A549 (cell line): ENCODE measurements at regions of chr6 and their contacts with region 1.

Region 1: GRCh38 chr6:32118782-32119628 is 9.0 kb downstream of the ATF6B start:
- DNase-seq: peak; percentile 69 to 83
- ATAC-seq: peak; percentile 89 to 95
- H3K4me3 ChIP-seq: no peak overlapping the region
- H3K27ac ChIP-seq: no peak overlapping the region
- H3K4me1 ChIP-seq: peaks cover 14% of the 10 kb centered on the region; the same call in 1 of the 3 replicates
- CTCF ChIP-seq: peak; percentile 73
- EP300 ChIP-seq: no peak
- POLR2A ChIP-seq: no peak
- RAD21 ChIP-seq: peak; percentile 76 to 78

Region 2: GRCh38 chr6:32081168-32081990 is 37.6 kb before region 1 on chr6:
- CTCF ChIA-PET with region 1: interaction called, 11 read pairs
- POLR2A ChIA-PET with region 1: no interaction called
- DNase-seq: no peak
- ATAC-seq: no peak
- H3K4me3 ChIP-seq: no peak overlapping the region
- H3K27ac ChIP-seq: no peak overlapping the region
- H3K4me1 ChIP-seq: peaks cover 7% of the 10 kb centered on the region; the same call in 1 of the 3 replicates
- CTCF ChIP-seq: no peak
- EP300 ChIP-seq: no peak
- POLR2A ChIP-seq: no peak
- RAD21 ChIP-seq: no peak

Region 3: DNA sequence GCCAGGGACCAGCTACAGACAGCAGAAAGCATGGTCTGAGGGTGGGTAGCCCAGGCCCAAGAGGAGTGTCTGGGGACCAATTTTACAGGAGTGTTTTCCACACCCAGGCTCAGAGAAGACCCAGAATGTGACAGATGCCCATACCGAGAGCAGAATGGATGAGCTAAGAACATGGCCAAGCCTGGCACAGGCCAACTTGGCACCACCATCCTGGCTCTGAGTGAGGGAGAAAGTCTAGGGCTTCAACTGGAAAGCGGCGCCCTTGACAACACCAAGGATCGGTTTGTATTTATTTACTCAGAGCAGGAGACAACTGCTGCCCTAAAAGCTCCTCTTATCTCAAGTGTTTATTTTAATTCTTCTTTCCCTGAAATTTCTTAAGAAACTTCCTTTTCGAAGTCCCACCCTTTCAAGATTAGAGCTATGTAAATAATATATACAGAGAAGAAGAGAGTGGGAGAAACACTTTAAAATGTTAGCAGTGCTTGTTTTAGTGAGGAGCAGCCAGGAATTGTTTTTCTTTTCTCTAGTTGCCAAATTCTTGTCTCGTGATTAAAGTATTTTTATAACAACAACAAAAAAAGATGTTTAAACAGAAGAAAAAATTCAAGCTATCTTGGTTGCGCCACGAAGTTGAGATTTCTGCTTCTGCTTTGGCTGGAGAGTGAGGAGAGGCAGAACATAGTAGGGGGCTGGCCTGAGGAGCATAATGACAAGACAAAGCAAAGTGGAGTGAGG is 26.1 kb before region 1 on chr6:
- CTCF ChIA-PET with region 1: interaction called, 41 read pairs
- POLR2A ChIA-PET with region 1: no interaction called
- DNase-seq: peak in 1 of 2 experiments; percentile 34
- ATAC-seq: peak; percentile 12 to 52; a peak in 3 of 6 replicates
- H3K4me3 ChIP-seq: no peak overlapping the region
- H3K27ac ChIP-seq: no peak overlapping the region
- H3K4me1 ChIP-seq: peaks cover 11% of the 10 kb centered on the region; the same call in 2 of the 3 replicates
- CTCF ChIP-seq: no peak
- EP300 ChIP-seq: no peak
- POLR2A ChIP-seq: no peak
- RAD21 ChIP-seq: no peak

Region 4: DNA sequence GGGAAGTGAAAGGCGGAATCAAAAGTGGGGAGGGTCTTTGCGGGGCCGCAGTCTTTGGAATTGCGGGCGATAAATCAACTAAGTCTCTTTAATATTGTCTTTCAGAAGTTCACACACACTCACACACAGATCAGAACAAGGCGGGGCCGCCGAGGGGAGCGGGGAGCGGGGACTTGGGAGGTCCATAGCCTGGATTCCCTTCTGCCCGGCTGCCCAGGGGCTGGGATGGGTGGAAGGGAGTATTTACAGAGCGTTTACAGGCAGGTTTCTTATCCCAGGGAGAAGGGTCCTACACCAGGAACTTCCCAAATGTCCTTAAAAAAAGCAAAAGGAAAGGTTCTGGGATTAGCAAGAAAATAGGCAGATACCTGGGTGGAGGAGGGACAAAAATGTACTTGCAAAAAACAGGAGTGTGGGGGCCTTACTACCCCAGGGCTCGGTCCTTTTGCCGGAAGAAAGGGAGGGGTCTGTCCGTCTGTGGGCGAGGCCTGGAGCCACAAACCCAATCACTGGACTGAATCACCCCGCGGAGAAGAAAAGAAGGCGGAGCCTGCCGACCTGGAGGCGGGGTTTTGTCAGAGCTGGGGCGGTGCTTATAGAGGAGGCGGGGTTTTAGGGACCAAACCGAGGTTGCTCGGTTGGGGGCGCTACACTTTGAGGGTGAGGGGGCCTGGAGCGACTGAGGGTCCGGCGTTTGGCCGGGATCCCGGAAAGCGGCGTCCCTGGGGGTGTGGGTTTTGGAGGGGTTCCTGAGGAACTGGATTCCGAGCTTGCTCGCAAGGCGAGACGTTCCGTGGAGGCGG is 29.5 kb after region 1 on chr6:
- CTCF ChIA-PET with region 1: interaction called, 15 read pairs
- POLR2A ChIA-PET with region 1: no interaction called
- DNase-seq: no peak
- ATAC-seq: no peak
- H3K4me3 ChIP-seq: no peak overlapping the region
- H3K27ac ChIP-seq: no peak overlapping the region
- H3K4me1 ChIP-seq: peaks cover 17% of the 10 kb centered on the region; the same call in 2 of the 3 replicates
- CTCF ChIP-seq: no peak
- EP300 ChIP-seq: no peak
- POLR2A ChIP-seq: no peak
- RAD21 ChIP-seq: no peak

Region 5: GRCh38 chr6:32195652-32195901 is 76.6 kb after region 1 on chr6:
- CTCF ChIA-PET with region 1: interaction called, 17 read pairs
- POLR2A ChIA-PET with region 1: no interaction called
- DNase-seq: peak; percentile 86 to 99
- ATAC-seq: no peak
- H3K4me3 ChIP-seq: peak overlapping the region; percentile 74; the same call in 1 of the 3 replicates
- H3K27ac ChIP-seq: peak overlapping the region; percentile 94; a peak in 3 of 6 replicates
- H3K4me1 ChIP-seq: peaks cover 28% of the 10 kb centered on the region
- CTCF ChIP-seq: no peak
- EP300 ChIP-seq: no peak
- POLR2A ChIP-seq: no peak
- RAD21 ChIP-seq: no peak

Region 6: GRCh38 chr6:32267035-32267434 is 148.0 kb after region 1 on chr6:
- CTCF ChIA-PET with region 1: no interaction called
- POLR2A ChIA-PET with region 1: no interaction called
- DNase-seq: no peak
- ATAC-seq: no peak
- H3K4me3 ChIP-seq: no peak overlapping the region
- H3K27ac ChIP-seq: no peak overlapping the region
- H3K4me1 ChIP-seq: no peaks in the 10 kb centered on the region
- CTCF ChIP-seq: no peak
- EP300 ChIP-seq: no peak
- POLR2A ChIP-seq: no peak
- RAD21 ChIP-seq: no peak